ENCODE measurements at regions of chr2 and their contacts with region 1.

Region 1: DNA sequence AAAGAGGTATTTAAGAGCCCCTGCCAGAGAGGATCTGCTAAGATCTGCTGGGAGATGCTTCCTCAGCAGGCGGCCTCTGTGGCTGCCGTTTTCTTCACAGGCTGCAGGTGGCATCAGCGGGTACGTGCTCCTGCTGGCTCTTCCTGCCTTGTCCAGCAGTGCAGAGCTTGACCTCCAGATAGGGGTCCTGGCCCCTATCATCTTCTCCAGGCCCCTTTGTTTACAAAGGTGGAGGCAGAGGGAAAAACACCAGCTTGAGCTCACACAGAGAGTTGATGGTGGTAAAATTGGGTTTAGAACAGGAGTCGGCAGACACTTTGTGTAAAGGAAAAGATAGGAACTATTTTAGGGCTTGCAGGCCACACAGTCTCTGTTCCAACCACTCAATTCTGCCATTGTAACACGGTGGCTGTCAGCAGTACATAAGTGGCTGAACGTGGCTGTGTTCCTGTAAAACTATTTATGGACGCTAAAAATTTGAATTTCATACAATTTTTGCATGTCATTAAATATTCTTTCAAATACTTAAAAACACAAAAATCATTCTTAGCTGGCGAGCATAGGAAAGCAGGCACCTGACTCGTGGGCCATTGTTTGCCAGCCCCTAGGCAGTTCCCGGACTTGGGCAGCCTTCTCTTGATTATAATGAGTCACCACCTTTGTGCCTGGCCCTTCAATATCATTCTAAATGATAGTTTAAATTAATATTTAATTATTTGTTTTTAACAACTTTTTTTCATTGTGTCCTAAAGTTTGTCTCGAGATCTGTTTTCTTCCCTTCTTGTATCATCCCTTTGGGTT is 98.2 kb upstream of the B3GNT7 start:
- DNase-seq: peak; percentile 67
- ATAC-seq: peak; percentile 83 to 84

Region 2: GRCh38 chr2:231394211-231395141 is 97.2 kb after region 1 on chr2:
- intact Hi-C with region 1: loop called in 1 of 2 experiments (anchors 5 kb)
- DNase-seq: no peak
- ATAC-seq: no peak

Region 3: DNA sequence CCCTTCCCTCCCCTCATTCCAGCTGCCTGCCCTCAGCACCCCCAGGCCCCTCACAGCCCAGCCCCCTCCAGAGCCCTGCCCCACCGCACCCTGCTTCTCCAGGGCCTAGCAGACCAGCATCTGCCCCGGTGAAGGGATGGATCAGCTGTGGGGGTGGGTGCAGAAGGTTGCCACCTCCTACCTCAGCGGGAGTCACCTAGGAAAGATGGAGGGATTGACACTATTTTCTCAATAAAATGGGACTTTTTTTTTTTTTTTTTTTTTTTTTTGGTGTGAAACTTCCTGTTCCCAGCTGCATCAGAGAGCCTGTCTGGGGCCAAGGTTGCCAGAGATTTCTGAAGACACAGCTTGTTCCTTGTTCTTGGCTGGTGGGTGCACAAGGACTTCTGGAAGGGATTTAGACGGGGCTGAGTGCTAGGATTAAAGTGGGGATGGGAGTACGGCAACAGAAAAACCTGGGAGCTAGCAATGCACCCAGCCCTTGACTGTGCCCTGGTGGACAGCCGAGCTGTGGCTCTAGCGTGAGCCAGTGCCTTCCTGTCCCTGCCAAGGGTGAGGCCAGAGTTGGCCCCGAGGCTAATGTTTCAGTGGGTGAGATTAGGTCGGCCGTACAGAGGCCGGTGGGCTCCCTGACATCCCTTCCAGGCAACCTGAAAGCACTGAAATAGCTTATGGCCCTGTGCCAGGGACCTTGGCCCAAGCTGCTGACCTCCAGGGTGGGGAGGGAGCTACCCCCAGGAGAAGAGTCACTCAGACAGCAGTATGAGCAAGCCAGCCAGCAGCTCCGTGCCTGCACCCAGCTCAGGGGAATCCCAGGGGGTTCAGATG is 102.8 kb after region 1 on chr2:
- intact Hi-C with region 1: loop called (anchors 2 to 5 kb)
- DNase-seq: peak; percentile 58
- ATAC-seq: peak; percentile 74 to 81

Measured in left cardiac atrium (tissue), 4 donors.